Activated CD4-positive, alpha-beta T cell treated with anti-CD3 and anti-CD28 coated beads, Interleukin-2, amount 10 ng/mL, durations not matched to agents 24 days and 14 days (primary cell): ENCODE measurements at regions of chr15 and their contacts with region 1.

Region 1: GRCh38 chr15:44426975-44427755 is at the start of gene CTDSPL2:
- DNase-seq: peak; percentile 98
- H3K4me3 Mint-ChIP-seq: peak within 1 kb of the TSS; percentile 93
- H3K27ac Mint-ChIP-seq: peak within 1 kb of the TSS; percentile 100
- H3K4me1 Mint-ChIP-seq: peaks cover 45% of the 10 kb centered on the region
- H3K27me3 Mint-ChIP-seq: no peaks in the 10 kb centered on the region
- total RNA-seq, gene CTDSPL2: 67.2 and 69.0 TPM in 2 replicates

Region 2: DNA sequence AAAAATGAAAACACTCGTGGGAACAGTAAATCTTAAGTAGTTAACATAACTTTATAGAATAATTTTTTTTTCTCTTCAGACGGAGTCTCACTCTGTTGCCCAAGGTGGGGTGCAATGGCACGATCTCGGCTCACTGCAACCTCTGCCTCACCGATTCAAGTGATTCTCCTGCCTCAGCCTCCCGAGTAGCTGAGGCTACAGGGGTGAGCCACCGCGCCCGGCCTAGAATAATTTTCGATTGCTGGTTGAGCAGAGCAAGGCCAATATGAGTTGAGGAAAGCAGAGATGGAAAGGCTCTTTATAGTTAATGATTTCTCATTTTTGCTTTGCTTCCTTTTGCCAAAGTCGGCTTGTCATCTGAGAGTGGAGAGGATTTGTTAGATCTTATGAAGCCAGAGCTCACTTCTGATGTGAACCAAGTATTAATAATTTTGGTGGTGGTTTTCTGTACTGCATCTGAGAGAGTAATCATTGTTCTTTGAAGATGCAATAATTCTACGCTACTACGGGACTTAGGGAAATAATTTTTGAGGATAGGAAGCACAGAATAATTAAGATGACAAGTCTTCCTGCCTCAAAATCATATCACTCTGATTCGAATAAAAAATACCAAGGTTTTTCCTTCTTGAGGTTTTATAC is 140.2 kb before region 1 on chr15:
- intact Hi-C with region 1: loop called (anchors 1 kb)
- DNase-seq: peak; percentile 60
- H3K4me3 Mint-ChIP-seq: peak overlapping the region; percentile 88
- H3K27ac Mint-ChIP-seq: peak overlapping the region; percentile 99
- H3K4me1 Mint-ChIP-seq: peaks cover 36% of the 10 kb centered on the region
- H3K27me3 Mint-ChIP-seq: peaks cover 9% of the 10 kb centered on the region

Region 3: DNA sequence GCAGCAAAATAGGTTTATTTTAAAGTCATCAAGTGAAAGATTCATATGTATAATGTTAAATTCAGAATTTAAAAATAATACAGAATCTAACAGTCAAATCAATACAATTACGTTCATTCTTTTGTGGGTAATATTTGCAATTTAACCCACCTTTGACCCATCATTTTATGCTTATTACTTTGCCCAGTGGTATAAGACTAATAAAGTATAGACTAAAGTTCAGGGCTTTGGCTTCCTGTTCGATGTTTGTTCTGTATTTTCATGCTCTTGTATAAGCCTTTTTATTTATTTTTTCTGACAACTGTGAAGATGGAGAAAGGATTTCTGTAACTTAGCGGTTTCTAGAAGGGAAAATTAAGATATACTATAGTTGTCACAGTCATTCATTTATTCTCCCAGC is 65.5 kb after region 1 on chr15:
- intact Hi-C with region 1: loop called (anchors 1 kb)
- DNase-seq: no peak
- H3K4me3 Mint-ChIP-seq: no peak overlapping the region
- H3K27ac Mint-ChIP-seq: no peak overlapping the region
- H3K4me1 Mint-ChIP-seq: peaks cover 17% of the 10 kb centered on the region
- H3K27me3 Mint-ChIP-seq: no peaks in the 10 kb centered on the region

Region 4: GRCh38 chr15:44501768-44502366 is 74.7 kb after region 1 on chr15:
- intact Hi-C with region 1: loop called (anchors 2 kb)
- DNase-seq: no peak
- H3K4me3 Mint-ChIP-seq: no peak overlapping the region
- H3K27ac Mint-ChIP-seq: peak overlapping the region; percentile 3
- H3K4me1 Mint-ChIP-seq: peaks cover 17% of the 10 kb centered on the region
- H3K27me3 Mint-ChIP-seq: no peaks in the 10 kb centered on the region

Region 5: GRCh38 chr15:44536962-44537734 is 110.0 kb after region 1 on chr15 and contains the start of gene EIF3J:
- intact Hi-C with region 1: loop called (anchors 2 kb)
- DNase-seq: peak; percentile 98
- H3K4me3 Mint-ChIP-seq: peak within 1 kb of the TSS; percentile 84
- H3K27ac Mint-ChIP-seq: peak within 1 kb of the TSS; percentile 96
- H3K4me1 Mint-ChIP-seq: peaks cover 43% of the 10 kb centered on the region
- H3K27me3 Mint-ChIP-seq: no peaks in the 10 kb centered on the region
- total RNA-seq, gene EIF3J: 161 and 166 TPM in 2 replicates

Region 6: DNA sequence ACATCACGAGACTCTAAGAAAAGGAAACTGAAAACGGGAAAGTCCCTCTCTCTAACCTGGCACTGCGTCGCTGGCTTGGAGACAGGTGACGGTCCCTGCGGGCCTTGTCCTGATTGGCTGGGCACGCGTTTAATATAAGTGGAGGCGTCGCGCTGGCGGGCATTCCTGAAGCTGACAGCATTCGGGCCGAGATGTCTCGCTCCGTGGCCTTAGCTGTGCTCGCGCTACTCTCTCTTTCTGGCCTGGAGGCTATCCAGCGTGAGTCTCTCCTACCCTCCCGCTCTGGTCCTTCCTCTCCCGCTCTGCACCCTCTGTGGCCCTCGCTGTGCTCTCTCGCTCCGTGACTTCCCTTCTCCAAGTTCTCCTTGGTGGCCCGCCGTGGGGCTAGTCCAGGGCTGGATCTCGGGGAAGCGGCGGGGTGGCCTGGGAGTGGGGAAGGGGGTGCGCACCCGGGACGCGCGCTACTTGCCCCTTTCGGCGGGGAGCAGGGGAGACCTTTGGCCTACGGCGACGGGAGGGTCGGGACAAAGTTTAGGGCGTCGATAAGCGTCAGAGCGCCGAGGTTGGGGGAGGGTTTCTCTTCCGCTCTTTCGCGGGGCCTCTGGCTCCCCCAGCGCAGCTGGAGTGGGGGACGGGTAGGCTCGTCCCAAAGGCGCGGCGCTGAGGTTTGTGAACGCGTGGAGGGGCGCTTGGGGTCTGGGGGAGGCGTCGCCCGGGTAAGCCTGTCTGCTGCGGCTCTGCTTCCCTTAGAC is 284.4 kb after region 1 on chr15 and contains the start of gene B2M:
- intact Hi-C with region 1: loop called (anchors 1 kb)
- DNase-seq: peak; percentile 99
- H3K4me3 Mint-ChIP-seq: peak within 1 kb of the TSS; percentile 94
- H3K27ac Mint-ChIP-seq: peak within 1 kb of the TSS; percentile 100
- H3K4me1 Mint-ChIP-seq: peaks cover 44% of the 10 kb centered on the region
- H3K27me3 Mint-ChIP-seq: no peaks in the 10 kb centered on the region
- total RNA-seq, gene B2M: 4,380 and 4,481 TPM in 2 replicates